GM12878 (cell line): ENCODE measurements at regions of chr4 and their contacts with region 1.

Region 1: DNA sequence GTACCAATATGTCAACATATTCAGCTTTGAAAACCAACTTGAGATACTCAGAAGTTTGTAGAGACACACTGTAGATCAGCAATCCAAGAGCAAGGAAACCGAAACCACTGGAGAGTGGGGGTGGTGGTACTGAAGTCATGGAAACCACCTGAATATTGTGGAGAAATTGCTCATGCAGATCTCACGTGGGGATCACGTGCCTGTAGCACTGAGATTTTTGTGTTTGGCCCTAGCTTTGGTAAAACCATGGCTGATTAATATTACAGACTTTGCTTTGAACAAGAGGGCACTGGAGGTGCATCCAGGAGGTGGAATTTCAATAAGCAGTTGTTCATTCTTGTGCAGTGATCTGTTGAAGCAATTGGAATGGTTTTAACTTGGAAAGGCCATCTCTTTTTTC is 47.2 kb downstream of the GBA3 start:
- DNase-seq: no peak
- ATAC-seq: peak; percentile 8
- H3K4me3 ChIP-seq: no peak overlapping the region
- H3K27ac ChIP-seq: no peak overlapping the region
- H3K4me1 ChIP-seq: no peaks in the 10 kb centered on the region
- H3K27me3 ChIP-seq: no peaks in the 10 kb centered on the region
- CTCF ChIP-seq: no peak
- EP300 ChIP-seq: no peak
- POLR2A ChIP-seq: no peak
- RAD21 ChIP-seq: no peak

Region 2: GRCh38 chr4:22712529-22712928 is 27.4 kb before region 1 on chr4:
- CTCF ChIA-PET with region 1: no interaction called
- POLR2A ChIA-PET with region 1: interaction called, 6 read pairs
- RAD21 ChIA-PET with region 1: interaction called, 8 read pairs
- SMC1A ChIA-PET with region 1: interaction called, 29 read pairs
- in situ Hi-C with region 1: no loop called
- intact Hi-C with region 1: no loop called
- DNase-seq: no peak
- ATAC-seq: peak; percentile 55
- H3K4me3 ChIP-seq: no peak overlapping the region
- H3K27ac ChIP-seq: no peak overlapping the region
- H3K4me1 ChIP-seq: no peaks in the 10 kb centered on the region
- H3K27me3 ChIP-seq: no peaks in the 10 kb centered on the region; a peak in 1 of 4 replicates
- CTCF ChIP-seq: no peak
- EP300 ChIP-seq: no peak
- POLR2A ChIP-seq: no peak
- RAD21 ChIP-seq: no peak

Region 3: GRCh38 chr4:22754126-22754525 is 14.2 kb after region 1 on chr4:
- CTCF ChIA-PET with region 1: interaction called, 3 read pairs
- POLR2A ChIA-PET with region 1: interaction called, 4 read pairs
- RAD21 ChIA-PET with region 1: interaction called, 3 read pairs
- SMC1A ChIA-PET with region 1: interaction called, 77 read pairs
- in situ Hi-C with region 1: no loop called
- intact Hi-C with region 1: no loop called
- DNase-seq: no peak
- ATAC-seq: no peak
- H3K4me3 ChIP-seq: no peak overlapping the region
- H3K27ac ChIP-seq: no peak overlapping the region
- H3K4me1 ChIP-seq: no peaks in the 10 kb centered on the region
- H3K27me3 ChIP-seq: no peaks in the 10 kb centered on the region
- CTCF ChIP-seq: no peak
- EP300 ChIP-seq: no peak
- POLR2A ChIP-seq: no peak
- RAD21 ChIP-seq: no peak

Region 4: DNA sequence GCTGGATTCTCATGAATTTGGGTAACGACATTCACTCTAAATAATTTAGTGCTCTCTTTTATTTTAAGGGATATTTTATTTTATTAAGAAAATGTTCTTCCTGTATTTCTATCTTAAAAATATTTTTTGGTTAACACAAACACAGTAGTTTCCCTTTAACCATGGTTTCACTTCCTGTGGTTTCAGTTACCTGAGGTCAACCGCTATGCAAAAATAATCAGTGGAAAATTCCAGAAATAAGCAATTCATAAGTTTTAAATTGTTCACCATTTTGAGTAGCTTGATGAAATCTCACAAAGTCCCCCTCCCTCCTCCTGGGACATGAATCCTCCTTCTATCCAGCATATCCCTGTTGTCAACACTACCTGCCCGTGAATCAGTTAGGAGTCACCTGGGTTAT is 24.2 kb after region 1 on chr4:
- CTCF ChIA-PET with region 1: interaction called, 5 read pairs
- POLR2A ChIA-PET with region 1: interaction called, 5 read pairs
- RAD21 ChIA-PET with region 1: interaction called, 6 read pairs
- SMC1A ChIA-PET with region 1: interaction called, 77 read pairs
- in situ Hi-C with region 1: no loop called
- intact Hi-C with region 1: no loop called
- DNase-seq: no peak
- ATAC-seq: peak; percentile 65
- H3K4me3 ChIP-seq: no peak overlapping the region
- H3K27ac ChIP-seq: no peak overlapping the region
- H3K4me1 ChIP-seq: no peaks in the 10 kb centered on the region
- H3K27me3 ChIP-seq: no peaks in the 10 kb centered on the region
- CTCF ChIP-seq: no peak
- EP300 ChIP-seq: peak; percentile 63 to 69; a peak in 2 of 4 replicates
- POLR2A ChIP-seq: no peak
- RAD21 ChIP-seq: no peak